OCI-LY7 (cell line): ENCODE measurements at regions of chr1 and their contacts with region 1.

Region 1: DNA sequence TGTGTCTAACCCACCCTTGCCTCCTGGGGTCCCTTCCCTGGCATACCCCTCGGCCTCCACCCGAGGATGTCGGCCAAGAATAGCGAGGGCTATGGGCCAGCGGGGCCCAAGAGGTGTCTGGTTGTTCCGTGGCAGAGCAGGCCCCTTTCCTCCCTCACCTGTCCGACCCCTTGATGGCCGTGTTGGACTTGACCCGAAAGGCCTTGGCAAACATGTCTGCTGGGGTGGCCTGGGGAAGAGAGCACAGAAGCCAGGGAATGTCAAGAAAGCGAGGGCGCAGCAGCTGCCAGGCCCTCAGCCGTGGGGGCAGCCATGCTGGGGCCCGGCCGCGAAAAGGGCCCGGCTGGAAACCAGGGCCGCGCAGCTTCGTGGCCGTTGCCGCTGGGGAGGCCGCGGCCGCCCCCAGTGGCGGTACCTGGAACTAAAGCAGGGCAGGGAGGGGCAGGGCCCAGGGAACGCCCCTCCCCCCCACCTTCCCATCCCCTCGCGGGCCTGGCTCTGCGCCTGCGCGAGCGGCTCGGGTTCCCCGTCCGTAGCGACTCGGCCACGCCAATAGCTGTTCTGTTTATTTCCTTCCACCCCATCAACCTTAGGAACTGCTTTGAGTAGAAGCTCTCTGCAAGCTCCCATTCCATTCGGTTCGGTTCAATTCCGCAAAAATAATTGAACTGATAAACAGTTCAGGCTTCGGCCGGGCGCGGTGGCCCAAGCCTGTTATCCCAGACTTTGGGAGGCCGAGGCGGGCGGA is at the start of gene EIF2D:
- DNase-seq: peak; percentile 96
- H3K4me3 ChIP-seq: peak within 1 kb of the TSS; percentile 72
- H3K27ac ChIP-seq: peak within 1 kb of the TSS; percentile 27
- H3K4me1 ChIP-seq: peaks cover 13% of the 10 kb centered on the region
- CTCF ChIP-seq: peak; percentile 82
- total RNA-seq, gene EIF2D: 85.4 and 89.3 TPM in 2 replicates

Region 2: GRCh38 chr1:206663832-206664652 is 51.7 kb after region 1 on chr1:
- CTCF ChIA-PET with region 1: interaction called, 11 read pairs
- POLR2A ChIA-PET with region 1: interaction called, 7 read pairs
- intact Hi-C with region 1: loop called (anchors 1 kb)
- DNase-seq: peak; percentile 81
- H3K4me3 ChIP-seq: no peak overlapping the region
- H3K27ac ChIP-seq: no peak overlapping the region
- H3K4me1 ChIP-seq: peaks cover 18% of the 10 kb centered on the region
- CTCF ChIP-seq: peak; percentile 92